Gastrocnemius medialis (tissue), 4 donors: ENCODE measurements at regions of chr19 and their contacts with region 1.

Region 1: GRCh38 chr19:52527134-52527955 is at the start of gene ZNF808:
- DNase-seq: peak; percentile 90 to 96
- ATAC-seq: peak; percentile 93 to 96
- H3K4me3 ChIP-seq: peak within 1 kb of the TSS; percentile 73 to 94 (median 88)
- H3K27ac ChIP-seq: peak within 1 kb of the TSS; percentile 76 to 92 (median 90)
- H3K4me1 ChIP-seq: peaks cover 8 to 11% of the 10 kb centered on the region in 2 donors
- H3K27me3 ChIP-seq: no peaks in the 10 kb centered on the region
- CTCF ChIP-seq: peak; percentile 64 to 72 (median 68)
- POLR2A ChIP-seq: peak in 1 of 2 donors; percentile 44
- total RNA-seq, gene ZNF808: 3.4 to 12.9 (median 7.9) TPM

Region 2: GRCh38 chr19:51986309-51987291 is 540.7 kb before region 1 on chr19 and contains the start of gene ZNF350:
- in situ Hi-C with region 1: no loop called
- intact Hi-C with region 1: loop called (anchors 1 kb)
- DNase-seq: peak; percentile 87 to 91
- ATAC-seq: peak; percentile 100
- H3K4me3 ChIP-seq: peak within 1 kb of the TSS; percentile 69 to 92 (median 86)
- H3K27ac ChIP-seq: peak within 1 kb of the TSS; percentile 74 to 79 (median 77)
- H3K4me1 ChIP-seq: peaks cover 8 to 9% of the 10 kb centered on the region in 2 donors
- H3K27me3 ChIP-seq: no peaks in the 10 kb centered on the region
- CTCF ChIP-seq: no peak
- POLR2A ChIP-seq: peak in 1 of 2 donors; percentile 21
- total RNA-seq, gene ZNF350: 1.7 to 6.0 (median 5.0) TPM

Region 3: GRCh38 chr19:52189735-52190486 is 337.4 kb before region 1 on chr19 and contains the start of gene PPP2R1A:
- in situ Hi-C with region 1: no loop called
- intact Hi-C with region 1: loop called (anchors 5 kb)
- DNase-seq: peak; percentile 100
- ATAC-seq: peak; percentile 90 to 95
- H3K4me3 ChIP-seq: peak within 1 kb of the TSS; percentile 68 to 99 (median 88)
- H3K27ac ChIP-seq: peak within 1 kb of the TSS; percentile 92 to 99 (median 94)
- H3K4me1 ChIP-seq: peaks cover 47 to 53% of the 10 kb centered on the region in 2 donors
- H3K27me3 ChIP-seq: no peaks in the 10 kb centered on the region
- CTCF ChIP-seq: no peak
- POLR2A ChIP-seq: peak; percentile 88 to 95
- total RNA-seq, gene PPP2R1A: 263 to 302 (median 290) TPM

Region 4: DNA sequence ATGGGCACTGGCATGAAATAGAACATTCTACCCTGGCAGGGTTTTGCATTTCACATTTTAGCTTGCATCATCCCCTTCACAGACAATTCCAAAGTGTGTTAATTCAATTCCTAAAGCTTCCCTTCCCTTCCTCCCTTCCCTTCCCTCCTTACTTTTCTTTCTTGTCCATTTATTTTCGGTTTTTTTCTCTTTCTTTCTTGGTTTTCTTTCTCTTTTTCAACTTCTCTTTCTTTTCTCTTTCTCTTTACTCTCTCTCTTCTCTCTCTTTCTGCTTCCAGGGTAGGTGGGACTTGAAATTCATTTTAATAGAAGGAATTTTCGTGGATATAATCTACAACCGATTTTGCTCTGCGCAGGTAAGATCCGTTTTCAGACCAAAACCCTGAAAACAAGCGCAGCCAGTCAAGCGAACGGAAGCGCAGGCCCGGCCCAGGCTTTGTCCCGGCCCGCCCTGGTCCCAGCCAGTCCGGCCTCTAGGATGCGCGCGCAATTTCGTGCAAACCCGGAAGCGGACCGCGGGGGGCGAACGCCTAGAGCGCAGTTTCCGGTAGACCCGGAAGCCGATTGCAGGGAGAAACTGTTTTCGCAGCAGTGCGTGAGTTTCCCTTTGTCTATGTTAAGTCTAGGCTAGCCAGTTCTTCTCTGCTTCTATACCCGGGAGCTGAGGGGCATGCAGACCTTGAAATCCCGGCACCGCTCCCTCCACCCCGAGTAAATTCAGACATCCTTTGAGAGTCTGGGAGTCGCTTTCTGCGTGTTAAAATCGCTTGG is 129.8 kb before region 1 on chr19 and contains the start of gene ZNF528:
- in situ Hi-C with region 1: no loop called
- intact Hi-C with region 1: loop called (anchors 5 kb)
- DNase-seq: peak; percentile 83 to 88
- ATAC-seq: peak; percentile 94 to 95
- H3K4me3 ChIP-seq: peak within 1 kb of the TSS; percentile 80 to 97 (median 91)
- H3K27ac ChIP-seq: peak within 1 kb of the TSS; percentile 53 to 77 (median 74)
- H3K4me1 ChIP-seq: peaks cover 14 to 18% of the 10 kb centered on the region in 2 donors
- H3K27me3 ChIP-seq: no peaks in the 10 kb centered on the region
- CTCF ChIP-seq: no peak
- POLR2A ChIP-seq: peak in 1 of 2 donors; percentile 50
- total RNA-seq, gene ZNF528: 2.9 to 11.2 (median 5.5) TPM

Region 5: GRCh38 chr19:52601025-52601973 is 74.0 kb after region 1 on chr19:
- in situ Hi-C with region 1: no loop called
- intact Hi-C with region 1: loop called (anchors 1 kb)
- DNase-seq: peak; percentile 80 to 83
- ATAC-seq: peak; percentile 95 to 96
- H3K4me3 ChIP-seq: peak overlapping the region; percentile 54 to 100 (median 72)
- H3K27ac ChIP-seq: peak overlapping the region; percentile 25 to 66 (median 56)
- H3K4me1 ChIP-seq: peaks cover 10 to 17% of the 10 kb centered on the region in 2 donors
- H3K27me3 ChIP-seq: peaks cover 0 to 6% (median 0%) of the 10 kb centered on the region in 3 donors
- CTCF ChIP-seq: peak in 4 of 5 experiments; percentile 12 to 59 (median 38)
- POLR2A ChIP-seq: no peak

Region 6: DNA sequence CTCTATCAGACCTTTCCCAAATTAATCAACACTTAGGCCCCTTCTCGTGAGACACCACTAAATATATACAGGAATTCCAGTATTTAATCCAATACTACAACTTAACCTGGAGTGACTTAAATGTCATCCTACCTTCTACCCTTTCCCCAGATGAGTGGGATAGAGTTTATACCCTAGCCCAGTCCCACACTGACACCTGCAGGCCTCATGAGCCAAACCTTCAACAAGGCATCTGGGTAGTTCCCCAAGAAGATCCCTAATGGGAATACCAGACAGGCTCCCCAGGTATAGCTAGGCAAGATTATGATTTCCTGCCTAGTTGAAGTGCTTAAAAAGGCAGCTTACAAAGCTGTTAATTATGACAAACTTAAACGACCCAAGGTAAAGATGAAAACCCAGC is 94.9 kb after region 1 on chr19:
- in situ Hi-C with region 1: no loop called
- intact Hi-C with region 1: no loop called
- DNase-seq: no peak
- ATAC-seq: no peak
- H3K4me3 ChIP-seq: no peak overlapping the region
- H3K27ac ChIP-seq: no peak overlapping the region
- H3K4me1 ChIP-seq: no peaks in the 10 kb centered on the region
- H3K27me3 ChIP-seq: no peaks in the 10 kb centered on the region
- CTCF ChIP-seq: no peak
- POLR2A ChIP-seq: no peak

Region 7: GRCh38 chr19:52761696-52762095 is 234.4 kb after region 1 on chr19:
- in situ Hi-C with region 1: no loop called
- intact Hi-C with region 1: no loop called
- DNase-seq: no peak
- ATAC-seq: no peak
- H3K4me3 ChIP-seq: no peak overlapping the region
- H3K27ac ChIP-seq: no peak overlapping the region
- H3K4me1 ChIP-seq: no peaks in the 10 kb centered on the region
- H3K27me3 ChIP-seq: no peaks in the 10 kb centered on the region
- CTCF ChIP-seq: no peak
- POLR2A ChIP-seq: no peak